K562 (cell line): ENCODE measurements at regions of chr5 and their contacts with region 1.

Region 1: GRCh38 chr5:146426853-146427618 is 20.1 kb upstream of the TCERG1 start:
- DNase-seq: peak; percentile 32 to 55 (median 40)
- ATAC-seq: peak; percentile 85
- H3K4me3 ChIP-seq: no peak overlapping the region
- H3K27ac ChIP-seq: no peak overlapping the region
- H3K4me1 ChIP-seq: no peaks in the 10 kb centered on the region; a peak in 1 of 5 replicates
- H3K27me3 ChIP-seq: peaks cover 7 to 23% of the 10 kb centered on the region in 2 experiments; a peak in 4 of 5 replicates
- CTCF ChIP-seq: peak; percentile 46 to 79 (median 70); a peak in 5 of 6 replicates
- EP300 ChIP-seq: no peak
- POLR2A ChIP-seq: no peak
- RAD21 ChIP-seq: peak; percentile 80 to 89

Region 2: DNA sequence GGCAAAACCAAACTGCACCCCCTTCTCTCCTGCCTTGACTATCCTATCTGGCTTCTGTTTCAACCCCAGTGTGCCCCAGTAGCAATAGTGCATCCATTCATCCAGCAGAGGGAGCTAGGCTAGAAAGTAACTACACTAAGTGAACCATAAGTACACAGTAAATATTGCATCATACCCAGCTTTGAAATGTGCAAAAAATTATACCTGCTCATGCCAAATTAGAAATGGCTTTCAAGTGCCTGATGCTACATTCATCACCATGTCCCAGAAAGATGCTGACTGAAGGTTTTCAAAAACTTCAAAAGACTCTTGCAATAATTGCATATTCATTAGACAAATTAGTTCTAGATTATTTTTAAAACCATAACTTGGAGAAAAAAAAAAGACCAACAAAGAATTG is 745.4 kb before region 1 on chr5:
- CTCF ChIA-PET with region 1: no interaction called
- POLR2A ChIA-PET with region 1: no interaction called
- in situ Hi-C with region 1: no loop called
- intact Hi-C with region 1: loop called (anchors 10 kb)
- DNase-seq: peak; percentile 73 to 80 (median 76)
- ATAC-seq: peak; percentile 98
- H3K4me3 ChIP-seq: no peak overlapping the region
- H3K27ac ChIP-seq: no peak overlapping the region
- H3K4me1 ChIP-seq: peaks cover 0 to 10% of the 10 kb centered on the region in 2 experiments; a peak in 2 of 5 replicates
- H3K27me3 ChIP-seq: no peaks in the 10 kb centered on the region
- CTCF ChIP-seq: peak; percentile 78 to 87 (median 84)
- EP300 ChIP-seq: peak; percentile 57; the same call in 1 of the 2 replicates
- POLR2A ChIP-seq: no peak
- RAD21 ChIP-seq: peak; percentile 82 to 87

Region 3: DNA sequence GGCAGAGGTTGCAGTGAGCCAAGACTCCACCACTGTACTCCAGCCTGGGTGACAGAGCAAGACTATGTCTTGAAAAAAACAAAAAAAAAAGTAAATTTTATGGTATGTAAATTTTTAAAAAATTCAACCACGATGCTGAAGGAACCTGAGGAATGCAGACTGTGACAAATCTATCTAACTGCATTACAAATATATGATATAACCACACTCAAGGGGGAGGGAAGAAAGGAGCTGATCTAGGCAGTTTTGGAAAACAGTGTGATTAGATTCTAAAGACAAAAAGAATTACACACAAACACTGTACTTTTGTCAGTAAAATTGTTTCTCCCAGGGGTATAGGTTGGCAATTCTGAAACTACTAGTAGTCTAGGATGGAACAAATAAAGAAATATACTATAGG is 261.6 kb before region 1 on chr5:
- CTCF ChIA-PET with region 1: no interaction called
- POLR2A ChIA-PET with region 1: no interaction called
- in situ Hi-C with region 1: no loop called
- intact Hi-C with region 1: loop called (anchors 10 kb)
- DNase-seq: no peak
- ATAC-seq: no peak
- H3K4me3 ChIP-seq: no peak overlapping the region
- H3K27ac ChIP-seq: no peak overlapping the region
- H3K4me1 ChIP-seq: no peaks in the 10 kb centered on the region
- H3K27me3 ChIP-seq: no peaks in the 10 kb centered on the region
- CTCF ChIP-seq: no peak
- EP300 ChIP-seq: no peak
- POLR2A ChIP-seq: no peak
- RAD21 ChIP-seq: no peak

Region 4: GRCh38 chr5:146254223-146254622 is 172.8 kb before region 1 on chr5:
- CTCF ChIA-PET with region 1: no interaction called
- POLR2A ChIA-PET with region 1: no interaction called
- in situ Hi-C with region 1: no loop called
- intact Hi-C with region 1: no loop called
- DNase-seq: no peak
- ATAC-seq: no peak
- H3K4me3 ChIP-seq: no peak overlapping the region
- H3K27ac ChIP-seq: no peak overlapping the region
- H3K4me1 ChIP-seq: no peaks in the 10 kb centered on the region
- H3K27me3 ChIP-seq: no peaks in the 10 kb centered on the region
- CTCF ChIP-seq: no peak
- EP300 ChIP-seq: no peak
- POLR2A ChIP-seq: no peak
- RAD21 ChIP-seq: no peak

Region 5: DNA sequence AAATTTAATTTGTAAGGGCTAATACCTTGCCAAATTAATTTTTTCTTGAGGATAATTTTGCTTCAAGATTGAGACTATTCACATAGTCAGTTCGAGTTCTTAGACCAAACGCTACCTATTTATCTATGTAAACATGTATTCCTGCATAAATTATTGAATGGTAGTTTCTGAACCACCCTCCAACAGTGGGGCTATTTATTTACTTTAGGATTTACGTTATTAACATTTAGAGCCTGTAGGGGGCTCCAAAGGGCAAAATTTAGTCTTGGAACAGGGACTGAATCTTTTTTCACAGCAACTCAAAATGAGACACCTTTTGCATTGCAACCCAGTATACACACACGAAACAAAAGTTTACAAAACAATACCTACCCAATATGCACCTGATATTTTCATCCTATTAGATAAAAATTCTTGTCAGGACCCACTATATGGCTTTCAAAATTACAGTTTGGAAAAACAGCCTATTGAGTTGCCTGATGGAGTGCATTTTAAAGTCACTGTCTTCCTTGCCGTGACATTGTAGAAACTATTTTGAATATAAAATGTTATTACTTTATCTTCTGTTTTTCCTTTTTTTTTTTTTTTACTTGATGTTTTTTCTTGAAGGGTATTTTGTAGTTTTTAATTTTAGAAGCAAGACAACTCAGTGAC is 135.5 kb before region 1 on chr5:
- CTCF ChIA-PET with region 1: interaction called, 23 read pairs
- POLR2A ChIA-PET with region 1: no interaction called
- in situ Hi-C with region 1: no loop called
- intact Hi-C with region 1: loop called (anchors 1 kb)
- DNase-seq: peak; percentile 50 to 72 (median 54)
- ATAC-seq: peak; percentile 92
- H3K4me3 ChIP-seq: no peak overlapping the region
- H3K27ac ChIP-seq: no peak overlapping the region
- H3K4me1 ChIP-seq: 0 out of 5 replicates have a peak, but pooled peaks cover 0 to 5% of the 10 kb centered on the region in 2 experiments
- H3K27me3 ChIP-seq: no peaks in the 10 kb centered on the region
- CTCF ChIP-seq: peak; percentile 58 to 81 (median 66); a peak in 5 of 6 replicates
- EP300 ChIP-seq: no peak
- POLR2A ChIP-seq: no peak
- RAD21 ChIP-seq: peak; percentile 48 to 60